Brain microvascular endothelial cell (primary cell): ENCODE measurements at regions of chr11 and their contacts with region 1.

Region 1: GRCh38 chr11:117426269-117426685 is 98.6 kb downstream of the CEP164 start:
- DNase-seq: peak; percentile 20
- H3K4me3 ChIP-seq: no peak overlapping the region
- H3K27ac ChIP-seq: no peak overlapping the region
- H3K27me3 ChIP-seq: peaks cover 2% of the 10 kb centered on the region
- CTCF ChIP-seq: peak; percentile 99

Region 2: DNA sequence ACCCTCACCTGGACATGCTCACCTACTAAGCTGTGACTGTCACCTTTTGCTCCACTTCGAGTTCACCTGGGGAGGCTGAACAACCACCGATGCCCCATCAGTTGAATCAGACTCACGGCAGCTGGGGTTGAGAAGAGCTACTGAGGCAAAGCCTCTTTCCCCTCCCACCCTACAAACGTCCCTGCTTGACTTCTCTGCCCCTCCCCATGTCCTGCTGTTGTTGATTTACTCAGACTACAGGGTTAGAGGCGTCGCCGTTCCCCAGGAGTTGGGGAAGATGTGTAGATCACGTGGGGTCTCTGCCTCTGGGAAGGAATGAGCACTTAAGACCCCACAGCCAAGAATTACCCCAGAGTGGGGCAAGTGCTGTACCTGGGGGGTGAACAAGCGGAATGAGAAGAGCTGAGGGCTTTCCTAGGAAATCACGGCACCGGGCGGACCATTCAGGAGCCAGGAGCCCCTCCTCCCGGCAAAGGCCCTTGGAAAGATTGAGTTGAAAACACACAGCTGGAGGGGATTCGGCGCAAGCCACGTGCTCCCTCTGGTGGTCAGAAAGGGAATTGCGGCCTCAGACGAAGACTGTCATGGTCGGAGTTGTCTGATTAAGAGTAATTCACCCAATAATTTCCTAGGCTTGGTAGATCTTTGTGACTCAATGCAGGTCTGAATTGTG is 391.2 kb after region 1 on chr11:
- in situ Hi-C with region 1: loop called (anchors 25 kb)
- DNase-seq: peak; percentile 83
- H3K4me3 ChIP-seq: no peak overlapping the region
- H3K27ac ChIP-seq: no peak overlapping the region
- H3K27me3 ChIP-seq: no peaks in the 10 kb centered on the region
- CTCF ChIP-seq: peak; percentile 99